A549 (cell line): ENCODE measurements at regions of chr9 and their contacts with region 1.

Region 1: GRCh38 chr9:129737479-129738274 is 15.2 kb downstream of the PTGES start:
- DNase-seq: peak; percentile 79 to 81
- ATAC-seq: peak; percentile 84 to 90
- H3K4me3 ChIP-seq: peak overlapping the region; percentile 41
- H3K27ac ChIP-seq: peak overlapping the region; percentile 86 to 95
- H3K4me1 ChIP-seq: peaks cover 10% of the 10 kb centered on the region
- CTCF ChIP-seq: peak; percentile 95
- EP300 ChIP-seq: no peak
- POLR2A ChIP-seq: no peak
- RAD21 ChIP-seq: peak; percentile 93 to 98

Region 2: GRCh38 chr9:129641746-129642513 is 95.7 kb before region 1 on chr9 and contains the start of gene ASB6:
- CTCF ChIA-PET with region 1: interaction called, 54 read pairs
- POLR2A ChIA-PET with region 1: no interaction called
- DNase-seq: peak; percentile 98
- ATAC-seq: peak; percentile 93 to 97
- H3K4me3 ChIP-seq: peak within 1 kb of the TSS; percentile 87
- H3K27ac ChIP-seq: peak within 1 kb of the TSS; percentile 83 to 94
- H3K4me1 ChIP-seq: peaks cover 18% of the 10 kb centered on the region
- CTCF ChIP-seq: peak; percentile 99
- EP300 ChIP-seq: no peak
- POLR2A ChIP-seq: peak; percentile 60
- RAD21 ChIP-seq: peak; percentile 87 to 99
- polyA plus RNA-seq, gene ASB6: 9.2 and 9.4 TPM in 2 replicates

Region 3: GRCh38 chr9:129676975-129677841 is 60.5 kb before region 1 on chr9:
- CTCF ChIA-PET with region 1: interaction called, 22 read pairs
- POLR2A ChIA-PET with region 1: no interaction called
- DNase-seq: no peak
- ATAC-seq: peak in 1 of 2 experiments; percentile 43; a peak in 2 of 6 replicates
- H3K4me3 ChIP-seq: no peak overlapping the region
- H3K27ac ChIP-seq: no peak overlapping the region
- H3K4me1 ChIP-seq: no peaks in the 10 kb centered on the region
- CTCF ChIP-seq: no peak
- EP300 ChIP-seq: no peak
- POLR2A ChIP-seq: no peak
- RAD21 ChIP-seq: no peak

Region 4: GRCh38 chr9:129702589-129703520 is 34.8 kb before region 1 on chr9:
- CTCF ChIA-PET with region 1: interaction called, 15 read pairs
- POLR2A ChIA-PET with region 1: no interaction called
- DNase-seq: peak; percentile 57 to 61
- ATAC-seq: peak in 1 of 2 experiments; percentile 49; a peak in 3 of 6 replicates
- H3K4me3 ChIP-seq: no peak overlapping the region
- H3K27ac ChIP-seq: 0 out of 6 replicates have a peak overlapping the region, but pooled peaks of 1 of the 2 experiments have one; percentile 19
- H3K4me1 ChIP-seq: peaks cover 8% of the 10 kb centered on the region
- CTCF ChIP-seq: no peak
- EP300 ChIP-seq: no peak
- POLR2A ChIP-seq: no peak
- RAD21 ChIP-seq: no peak

Region 5: GRCh38 chr9:129752915-129753729 is 15.4 kb after region 1 on chr9 and contains the start of gene PTGES:
- CTCF ChIA-PET with region 1: interaction called, 161 read pairs
- POLR2A ChIA-PET with region 1: interaction called, 6 read pairs
- DNase-seq: peak; percentile 79 to 91
- ATAC-seq: peak; percentile 93 to 97
- H3K4me3 ChIP-seq: peak within 1 kb of the TSS; percentile 51
- H3K27ac ChIP-seq: peak within 1 kb of the TSS; percentile 64 to 78
- H3K4me1 ChIP-seq: peaks cover 47% of the 10 kb centered on the region
- CTCF ChIP-seq: no peak
- EP300 ChIP-seq: no peak
- POLR2A ChIP-seq: peak; percentile 51
- RAD21 ChIP-seq: no peak
- polyA plus RNA-seq, gene PTGES: 19.1 and 22.1 TPM in 2 replicates

Region 6: GRCh38 chr9:129769669-129770068 is 32.0 kb after region 1 on chr9:
- CTCF ChIA-PET with region 1: interaction called, 1,179 read pairs
- POLR2A ChIA-PET with region 1: no interaction called
- DNase-seq: no peak
- ATAC-seq: no peak
- H3K4me3 ChIP-seq: no peak overlapping the region
- H3K27ac ChIP-seq: peak overlapping the region in 1 of 2 experiments; percentile 45; a peak in 2 of 6 replicates
- H3K4me1 ChIP-seq: peaks cover 24% of the 10 kb centered on the region
- CTCF ChIP-seq: no peak
- EP300 ChIP-seq: no peak
- POLR2A ChIP-seq: no peak
- RAD21 ChIP-seq: no peak

Region 7: DNA sequence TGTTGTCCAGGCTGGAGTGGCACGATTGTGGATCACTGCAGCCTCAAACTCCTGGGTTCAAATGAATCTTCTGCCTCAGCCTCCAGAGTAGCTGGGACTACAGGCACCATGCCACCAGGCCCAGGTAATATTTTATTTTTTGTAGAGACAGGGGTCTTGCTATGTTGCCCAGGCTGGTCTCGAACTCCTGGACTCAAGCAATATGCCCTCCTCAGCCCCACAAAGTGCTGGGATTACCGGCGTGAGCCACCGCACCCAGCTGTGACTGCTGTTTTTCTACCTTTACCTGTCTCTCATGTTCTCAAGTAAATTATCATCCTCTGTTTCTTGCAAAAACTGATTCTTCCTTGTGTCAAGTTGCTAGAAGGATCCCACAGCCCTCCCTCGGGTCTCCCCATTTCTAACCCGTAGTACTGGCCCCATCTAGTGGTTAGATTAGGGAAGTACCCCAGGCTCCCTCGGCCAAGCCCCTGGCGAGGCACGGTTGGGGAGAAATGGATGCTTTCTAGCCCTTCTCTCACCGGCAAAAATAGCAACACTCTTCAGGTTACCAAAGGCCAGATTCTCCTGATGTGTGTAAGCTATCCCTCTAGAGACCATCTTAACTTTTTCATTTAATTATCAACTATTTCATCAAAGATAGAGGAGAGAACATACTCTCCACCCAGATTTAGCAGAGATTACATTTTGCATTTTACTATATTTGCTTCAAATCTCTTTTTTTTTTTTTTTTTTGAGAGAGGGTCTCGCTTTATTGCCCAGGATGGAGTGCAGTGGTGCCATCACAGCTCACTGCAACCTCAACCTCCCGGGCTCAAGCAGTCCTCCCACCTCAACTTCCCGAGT is 46.1 kb after region 1 on chr9:
- CTCF ChIA-PET with region 1: interaction called, 1,179 read pairs
- POLR2A ChIA-PET with region 1: interaction called, 7 read pairs
- DNase-seq: peak; percentile 78 to 92
- ATAC-seq: peak; percentile 95 to 98
- H3K4me3 ChIP-seq: no peak overlapping the region
- H3K27ac ChIP-seq: peak overlapping the region; percentile 51 to 73
- H3K4me1 ChIP-seq: peaks cover 9% of the 10 kb centered on the region; the same call in 1 of the 3 replicates
- CTCF ChIP-seq: peak; percentile 95
- EP300 ChIP-seq: no peak
- POLR2A ChIP-seq: no peak
- RAD21 ChIP-seq: peak; percentile 98 to 99

Region 8: GRCh38 chr9:130010151-130010988 is 272.7 kb after region 1 on chr9:
- CTCF ChIA-PET with region 1: no interaction called
- POLR2A ChIA-PET with region 1: no interaction called
- DNase-seq: no peak
- ATAC-seq: no peak
- H3K4me3 ChIP-seq: no peak overlapping the region
- H3K27ac ChIP-seq: no peak overlapping the region
- H3K4me1 ChIP-seq: no peaks in the 10 kb centered on the region
- CTCF ChIP-seq: no peak
- EP300 ChIP-seq: no peak
- POLR2A ChIP-seq: no peak
- RAD21 ChIP-seq: no peak